ENCODE measurements at regions of chr17 and their contacts with region 1.

Region 1: GRCh38 chr17:74864866-74865395 is 5.2 kb upstream of the GRIN2C start:
- DNase-seq: peak; percentile 70 to 84
- ATAC-seq: peak; percentile 74 to 90 (median 76)
- H3K4me3 ChIP-seq: no peak overlapping the region
- H3K4me3 Mint-ChIP-seq: peak overlapping the region; percentile 13
- H3K27ac ChIP-seq: no peak overlapping the region
- H3K27ac Mint-ChIP-seq: no peak overlapping the region
- H3K4me1 ChIP-seq: peaks cover 24% of the 10 kb centered on the region
- H3K4me1 Mint-ChIP-seq: peaks cover 6 to 27% of the 10 kb centered on the region in 2 donors
- H3K27me3 ChIP-seq: peaks cover 19% of the 10 kb centered on the region
- H3K27me3 Mint-ChIP-seq: peaks cover 0 to 23% of the 10 kb centered on the region in 2 donors
- CTCF ChIP-seq: peak; percentile 88

Region 2: DNA sequence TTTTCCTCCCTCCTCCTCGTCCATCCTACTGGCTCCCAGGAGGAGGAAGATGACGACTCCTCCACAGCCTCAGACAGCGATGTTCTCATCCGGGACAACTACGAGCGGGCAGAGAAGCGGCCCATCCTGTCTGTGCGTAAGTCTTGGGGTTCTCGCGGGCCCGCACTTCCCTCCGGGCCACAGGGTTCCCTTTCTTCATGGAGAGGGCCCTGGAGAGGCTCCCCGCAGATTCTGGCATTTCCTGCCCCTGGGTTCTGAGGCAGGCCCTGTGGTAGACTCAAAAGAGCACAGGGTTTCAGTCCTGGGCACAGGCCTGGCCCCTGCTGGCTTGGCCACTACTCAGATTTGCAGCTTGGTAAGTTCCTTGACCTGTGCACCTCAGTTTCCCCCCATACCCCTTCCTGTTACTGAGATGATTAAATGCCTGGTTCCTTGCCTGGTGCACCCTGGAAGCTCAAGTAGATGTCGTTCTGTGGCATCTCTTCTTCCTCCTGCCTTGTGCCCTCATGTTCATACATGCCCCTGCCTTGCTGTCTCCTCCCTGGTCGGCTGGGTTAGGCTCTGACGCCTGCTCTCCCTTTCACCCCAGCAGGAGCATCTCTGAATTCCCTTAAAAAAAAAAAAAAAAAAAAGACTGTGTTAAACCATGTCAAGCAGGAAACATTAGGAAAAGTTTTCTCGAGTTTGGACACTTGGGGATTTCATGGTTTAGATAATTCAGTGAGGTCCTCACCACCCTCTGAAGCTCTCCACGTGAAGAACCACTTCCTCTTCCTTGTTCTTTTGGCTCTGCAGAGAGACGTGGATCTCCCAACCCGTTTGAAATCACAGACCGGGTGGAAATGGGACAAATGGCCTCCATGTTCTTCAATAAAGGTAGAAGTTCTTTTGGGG is 74.5 kb before region 1 on chr17:
- intact Hi-C with region 1: loop called (anchors 2 kb)
- DNase-seq: peak in 1 of 2 donors; percentile 33
- ATAC-seq: no peak
- H3K4me3 ChIP-seq: no peak overlapping the region
- H3K4me3 Mint-ChIP-seq: no peak overlapping the region
- H3K27ac ChIP-seq: no peak overlapping the region
- H3K27ac Mint-ChIP-seq: no peak overlapping the region
- H3K4me1 ChIP-seq: peaks cover 31% of the 10 kb centered on the region
- H3K4me1 Mint-ChIP-seq: peaks cover 12 to 25% of the 10 kb centered on the region in 2 donors
- H3K27me3 ChIP-seq: no peaks in the 10 kb centered on the region
- H3K27me3 Mint-ChIP-seq: no peaks in the 10 kb centered on the region
- CTCF ChIP-seq: no peak